ENCODE measurements at regions of chr4 and their contacts with region 1.

Region 1: GRCh38 chr4:140790765-140791164 is 34.6 kb upstream of the TBC1D9 start:
- DNase-seq: peak; percentile 10
- ATAC-seq: no peak
- H3K4me3 ChIP-seq: no peak overlapping the region
- H3K27ac ChIP-seq: no peak overlapping the region
- H3K4me1 ChIP-seq: no peaks in the 10 kb centered on the region
- H3K27me3 ChIP-seq: no peaks in the 10 kb centered on the region
- CTCF ChIP-seq: no peak

Region 2: GRCh38 chr4:140688711-140689598 is 101.8 kb before region 1 on chr4:
- CTCF ChIA-PET with region 1: no interaction called
- POLR2A ChIA-PET with region 1: interaction called, 11 read pairs
- in situ Hi-C with region 1: no loop called
- intact Hi-C with region 1: no loop called
- DNase-seq: no peak
- ATAC-seq: no peak
- H3K4me3 ChIP-seq: no peak overlapping the region
- H3K27ac ChIP-seq: no peak overlapping the region
- H3K4me1 ChIP-seq: no peaks in the 10 kb centered on the region
- H3K27me3 ChIP-seq: no peaks in the 10 kb centered on the region
- CTCF ChIP-seq: no peak